ENCODE measurements at regions of chr7 and their contacts with region 1.

Region 1: DNA sequence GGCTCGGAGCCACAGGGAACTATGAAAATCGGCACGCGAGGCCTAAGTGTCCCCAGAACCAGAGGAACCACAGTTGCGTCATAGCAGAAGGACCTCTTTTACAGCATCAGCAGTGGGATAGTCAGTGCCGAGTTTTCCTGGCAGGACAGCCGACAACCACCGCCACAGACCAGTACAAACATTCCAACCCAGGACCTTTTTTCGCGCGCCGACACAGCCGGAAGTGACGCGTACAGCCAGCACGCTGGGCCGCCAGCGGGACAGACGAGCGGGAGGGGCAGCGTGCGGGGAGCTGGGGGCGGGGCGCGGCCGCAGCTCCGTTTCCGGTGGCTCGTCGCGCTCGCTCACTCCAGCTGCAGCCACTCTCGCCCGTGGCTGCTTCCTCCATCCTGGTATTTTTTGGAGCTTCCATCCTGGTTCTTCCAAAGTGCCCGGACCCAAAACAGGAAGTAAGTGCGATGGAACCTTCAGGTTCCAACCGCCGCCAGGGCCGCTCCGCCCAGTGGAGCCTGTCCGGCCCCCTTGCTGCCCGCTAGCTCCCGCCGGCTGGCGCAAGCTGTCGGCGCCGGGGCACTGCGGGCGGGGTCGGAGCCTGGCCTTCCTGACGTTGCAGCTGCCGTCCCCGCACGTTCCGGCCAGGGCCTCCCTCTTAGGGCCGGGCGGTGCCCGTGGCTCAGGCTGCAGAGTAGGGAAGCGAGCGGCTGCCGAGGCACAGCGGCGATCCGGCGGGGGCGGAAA is at the start of gene DMTF1:
- DNase-seq: peak; percentile 83 to 89 (median 85)
- H3K4me3 ChIP-seq: peak within 1 kb of the TSS; percentile 82 to 99
- H3K4me3 Mint-ChIP-seq: peak within 1 kb of the TSS; percentile 94 to 99 (median 96)
- H3K27ac ChIP-seq: peak within 1 kb of the TSS; percentile 82
- H3K27ac Mint-ChIP-seq: peak within 1 kb of the TSS; percentile 95 to 100 (median 97)
- H3K4me1 ChIP-seq: peaks cover 47% of the 10 kb centered on the region
- H3K4me1 Mint-ChIP-seq: peaks cover 31 to 51% (median 43%) of the 10 kb centered on the region in 4 donors
- H3K27me3 ChIP-seq: no peaks in the 10 kb centered on the region
- H3K27me3 Mint-ChIP-seq: no peaks in the 10 kb centered on the region
- total RNA-seq, gene DMTF1: 173 to 183 TPM

Region 2: DNA sequence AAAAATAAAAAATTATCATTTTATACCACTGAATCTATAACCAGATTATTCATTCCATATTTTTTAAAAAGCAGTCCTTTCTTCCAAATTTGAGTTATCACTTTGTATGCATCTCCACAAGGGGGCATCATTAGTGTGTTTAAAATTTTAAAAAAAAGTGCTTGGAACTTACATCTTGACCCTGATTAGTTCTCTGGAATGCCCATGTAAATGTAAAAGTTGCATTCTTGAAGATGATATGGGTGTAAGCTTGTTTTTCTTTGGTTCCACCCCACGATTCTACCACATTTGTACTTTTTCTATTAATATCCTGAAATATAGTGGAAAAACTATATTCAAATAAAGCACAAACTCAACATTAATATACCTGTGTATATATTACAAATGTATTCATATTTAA is 237.7 kb before region 1 on chr7:
- CTCF ChIA-PET with region 1: interaction called, 17 read pairs
- POLR2A ChIA-PET with region 1: no interaction called
- intact Hi-C with region 1: no loop called
- DNase-seq: peak in 1 of 5 donors; percentile 10
- H3K4me3 ChIP-seq: no peak overlapping the region
- H3K4me3 Mint-ChIP-seq: no peak overlapping the region
- H3K27ac ChIP-seq: no peak overlapping the region
- H3K27ac Mint-ChIP-seq: no peak overlapping the region
- H3K4me1 ChIP-seq: no peaks in the 10 kb centered on the region
- H3K4me1 Mint-ChIP-seq: no peaks in the 10 kb centered on the region
- H3K27me3 ChIP-seq: no peaks in the 10 kb centered on the region
- H3K27me3 Mint-ChIP-seq: no peaks in the 10 kb centered on the region

Region 3: DNA sequence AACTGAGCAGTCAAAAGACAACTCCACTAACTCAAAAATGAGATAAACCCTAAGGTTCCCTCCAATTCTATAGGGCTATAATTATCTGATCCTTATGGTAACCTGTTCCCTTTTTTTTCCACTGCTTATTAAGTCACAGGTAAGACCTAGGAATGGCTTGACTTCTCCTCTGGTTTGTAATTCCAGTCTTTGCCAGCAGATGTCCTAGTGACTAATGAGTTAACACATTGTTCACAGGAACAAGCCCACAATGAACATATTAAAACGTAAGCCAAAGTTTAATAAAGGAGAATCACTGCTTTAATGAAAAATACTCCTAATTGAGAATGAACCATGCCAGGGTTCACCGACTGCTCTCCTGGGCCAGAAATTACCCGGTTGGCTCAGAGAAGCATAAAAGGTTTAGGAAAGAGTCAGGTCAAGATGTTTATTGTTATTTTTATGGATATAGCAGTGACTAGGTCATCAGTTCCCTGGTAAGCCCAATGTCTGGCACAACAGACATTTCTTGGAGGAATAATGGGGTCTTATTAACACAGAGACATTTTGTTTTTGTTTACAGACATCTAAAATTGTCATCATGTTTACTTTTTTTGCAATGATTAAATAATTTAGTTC is 213.0 kb before region 1 on chr7:
- CTCF ChIA-PET with region 1: interaction called, 34 read pairs
- POLR2A ChIA-PET with region 1: no interaction called
- intact Hi-C with region 1: loop called (anchors 1 kb)
- DNase-seq: peak; percentile 40 to 62 (median 52)
- H3K4me3 ChIP-seq: no peak overlapping the region
- H3K4me3 Mint-ChIP-seq: no peak overlapping the region
- H3K27ac ChIP-seq: no peak overlapping the region
- H3K27ac Mint-ChIP-seq: peak overlapping the region in 2 of 7 donors; percentile 75 to 85
- H3K4me1 ChIP-seq: no peaks in the 10 kb centered on the region
- H3K4me1 Mint-ChIP-seq: peaks cover 0 to 4% (median 3%) of the 10 kb centered on the region in 4 donors
- H3K27me3 ChIP-seq: no peaks in the 10 kb centered on the region
- H3K27me3 Mint-ChIP-seq: peaks cover 0 to 2% of the 10 kb centered on the region in 2 donors

Region 4: DNA sequence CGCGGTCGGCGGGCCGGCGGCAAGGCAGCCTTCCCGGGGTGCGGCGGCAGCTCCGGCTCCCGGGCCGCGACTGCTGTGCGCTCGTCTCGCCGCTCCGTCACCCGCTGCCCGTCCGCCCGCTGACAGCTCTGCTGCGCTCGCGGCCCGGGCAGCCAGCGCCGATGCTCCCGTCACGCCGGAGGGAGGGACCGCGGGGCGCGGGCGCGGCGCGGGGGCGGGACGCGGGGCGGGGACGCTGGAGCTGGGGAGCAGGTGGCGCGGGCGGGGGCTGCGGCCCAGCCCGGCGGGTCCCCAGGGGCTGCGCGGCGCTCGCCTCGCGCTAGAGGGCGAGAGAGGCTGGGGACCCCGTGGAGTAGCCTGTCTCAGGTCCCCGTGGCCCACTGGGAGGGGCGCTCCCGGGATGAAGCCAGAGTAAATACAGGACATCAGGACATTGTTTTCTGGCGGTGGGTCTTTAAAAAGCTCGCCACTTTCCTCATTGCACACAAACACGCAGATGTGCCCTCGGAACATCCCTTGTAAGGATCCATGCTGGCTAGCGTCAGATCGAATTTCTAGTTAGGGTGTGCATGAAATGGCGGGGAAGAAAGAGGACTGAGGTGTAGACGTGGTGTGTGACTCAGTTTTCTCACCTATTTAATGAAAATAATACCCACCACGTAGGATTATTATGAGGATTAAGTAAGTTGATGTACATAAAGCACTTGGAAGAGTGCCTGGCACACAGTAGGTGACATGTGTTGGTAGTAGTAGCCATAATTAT is 92.6 kb before region 1 on chr7 and contains the start of gene ELAPOR2:
- CTCF ChIA-PET with region 1: interaction called, 10 read pairs
- POLR2A ChIA-PET with region 1: interaction called, 15 read pairs
- intact Hi-C with region 1: loop called (anchors 1 kb)
- DNase-seq: peak; percentile 81 to 83 (median 82)
- H3K4me3 ChIP-seq: peak within 1 kb of the TSS; percentile 59 to 70
- H3K4me3 Mint-ChIP-seq: peak within 1 kb of the TSS; percentile 83 to 91 (median 88)
- H3K27ac ChIP-seq: peak within 1 kb of the TSS; percentile 53
- H3K27ac Mint-ChIP-seq: peak within 1 kb of the TSS; percentile 45 to 93 (median 86)
- H3K4me1 ChIP-seq: peaks cover 14% of the 10 kb centered on the region
- H3K4me1 Mint-ChIP-seq: peaks cover 12 to 20% (median 15%) of the 10 kb centered on the region in 4 donors
- H3K27me3 ChIP-seq: no peaks in the 10 kb centered on the region
- H3K27me3 Mint-ChIP-seq: peaks cover 0 to 3% of the 10 kb centered on the region in 2 donors
- total RNA-seq, gene ELAPOR2: 8.8 to 11.8 TPM

Region 5: GRCh38 chr7:87188930-87189329 is 36.7 kb after region 1 on chr7:
- CTCF ChIA-PET with region 1: no interaction called
- POLR2A ChIA-PET with region 1: interaction called, 10 read pairs
- intact Hi-C with region 1: no loop called
- DNase-seq: no peak
- H3K4me3 ChIP-seq: no peak overlapping the region
- H3K4me3 Mint-ChIP-seq: no peak overlapping the region
- H3K27ac ChIP-seq: no peak overlapping the region
- H3K27ac Mint-ChIP-seq: peak overlapping the region in 3 of 7 donors; percentile 11 to 62 (median 49)
- H3K4me1 ChIP-seq: peaks cover 10% of the 10 kb centered on the region
- H3K4me1 Mint-ChIP-seq: peaks cover 21 to 35% (median 29%) of the 10 kb centered on the region in 4 donors
- H3K27me3 ChIP-seq: no peaks in the 10 kb centered on the region
- H3K27me3 Mint-ChIP-seq: no peaks in the 10 kb centered on the region

Region 6: GRCh38 chr7:87345166-87345927 is 193.1 kb after region 1 on chr7 and contains the start of gene CROT:
- CTCF ChIA-PET with region 1: no interaction called
- POLR2A ChIA-PET with region 1: interaction called, 12 read pairs
- intact Hi-C with region 1: loop called (anchors 1 kb)
- DNase-seq: peak; percentile 91 to 94 (median 92)
- H3K4me3 ChIP-seq: peak within 1 kb of the TSS; percentile 13 to 73
- H3K4me3 Mint-ChIP-seq: peak within 1 kb of the TSS; percentile 89 to 97 (median 96)
- H3K27ac ChIP-seq: peak within 1 kb of the TSS; percentile 80
- H3K27ac Mint-ChIP-seq: peak within 1 kb of the TSS; percentile 94 to 98 (median 95)
- H3K4me1 ChIP-seq: peaks cover 44% of the 10 kb centered on the region
- H3K4me1 Mint-ChIP-seq: peaks cover 33 to 57% (median 46%) of the 10 kb centered on the region in 4 donors
- H3K27me3 ChIP-seq: no peaks in the 10 kb centered on the region
- H3K27me3 Mint-ChIP-seq: no peaks in the 10 kb centered on the region
- total RNA-seq, gene CROT: 17.8 to 19.0 TPM

Region 7: GRCh38 chr7:87517136-87517815 is 365.0 kb after region 1 on chr7:
- CTCF ChIA-PET with region 1: no interaction called
- POLR2A ChIA-PET with region 1: no interaction called
- intact Hi-C with region 1: no loop called
- DNase-seq: no peak
- H3K4me3 ChIP-seq: no peak overlapping the region
- H3K4me3 Mint-ChIP-seq: no peak overlapping the region
- H3K27ac ChIP-seq: no peak overlapping the region
- H3K27ac Mint-ChIP-seq: no peak overlapping the region
- H3K4me1 ChIP-seq: no peaks in the 10 kb centered on the region
- H3K4me1 Mint-ChIP-seq: no peaks in the 10 kb centered on the region
- H3K27me3 ChIP-seq: no peaks in the 10 kb centered on the region
- H3K27me3 Mint-ChIP-seq: peaks cover 4 to 8% of the 10 kb centered on the region in 2 donors

Measured in CD4-positive, alpha-beta memory T cell (primary cell).